Colonic mucosa (tissue), 4 donors: ENCODE measurements at regions of chr7 and their contacts with region 1.

Region 1: DNA sequence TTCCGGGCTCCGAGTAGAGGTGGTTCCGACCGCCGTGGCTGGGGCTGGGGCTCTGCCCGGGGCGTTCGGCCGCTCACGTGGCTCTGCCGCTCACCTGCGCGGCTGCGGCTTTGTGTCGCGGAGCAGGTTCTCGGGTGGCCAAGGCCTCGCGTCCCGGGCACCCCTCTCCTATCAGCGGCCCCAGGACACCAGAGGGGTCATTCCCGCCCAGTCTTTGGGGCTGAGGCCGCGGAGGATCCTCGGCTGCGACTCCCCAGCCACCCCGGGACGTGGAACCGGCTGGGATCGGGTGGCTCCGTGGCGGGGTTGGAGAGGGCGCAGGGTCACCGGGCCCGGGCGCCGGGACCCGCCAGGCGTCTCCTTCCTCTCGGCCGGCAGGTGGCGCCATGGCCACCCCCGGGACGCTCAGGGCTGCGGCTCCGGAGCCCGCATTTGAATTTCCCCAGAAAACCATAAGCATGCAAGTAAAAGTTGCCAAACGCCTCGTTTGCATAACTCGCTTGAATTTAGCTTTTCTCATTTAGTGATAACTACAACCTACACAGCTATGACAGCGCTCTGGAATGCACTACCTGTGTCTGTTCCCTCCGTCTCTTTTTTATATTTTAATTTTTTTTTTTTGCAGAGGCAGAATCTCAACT is 1.2 kb downstream of the COL26A1 start:
- DNase-seq: peak; percentile 48
- H3K4me3 ChIP-seq: peak overlapping the region; percentile 30
- H3K27ac ChIP-seq: no peak overlapping the region
- H3K4me1 ChIP-seq: no peaks in the 10 kb centered on the region
- H3K27me3 ChIP-seq: peaks cover 24% of the 10 kb centered on the region
- CTCF ChIP-seq: peak; percentile 95

Region 2: GRCh38 chr7:100520138-100520537 is 843.7 kb before region 1 on chr7:
- intact Hi-C with region 1: no loop called
- DNase-seq: no peak
- H3K4me3 ChIP-seq: no peak overlapping the region
- H3K27ac ChIP-seq: no peak overlapping the region
- H3K4me1 ChIP-seq: no peaks in the 10 kb centered on the region
- H3K27me3 ChIP-seq: no peaks in the 10 kb centered on the region
- CTCF ChIP-seq: no peak

Region 3: GRCh38 chr7:101410743-101411507 is 47.1 kb after region 1 on chr7:
- intact Hi-C with region 1: loop called (anchors 5 kb)
- DNase-seq: peak; percentile 26
- H3K4me3 ChIP-seq: no peak overlapping the region
- H3K27ac ChIP-seq: no peak overlapping the region
- H3K4me1 ChIP-seq: no peaks in the 10 kb centered on the region
- H3K27me3 ChIP-seq: no peaks in the 10 kb centered on the region
- CTCF ChIP-seq: peak; percentile 80

Region 4: DNA sequence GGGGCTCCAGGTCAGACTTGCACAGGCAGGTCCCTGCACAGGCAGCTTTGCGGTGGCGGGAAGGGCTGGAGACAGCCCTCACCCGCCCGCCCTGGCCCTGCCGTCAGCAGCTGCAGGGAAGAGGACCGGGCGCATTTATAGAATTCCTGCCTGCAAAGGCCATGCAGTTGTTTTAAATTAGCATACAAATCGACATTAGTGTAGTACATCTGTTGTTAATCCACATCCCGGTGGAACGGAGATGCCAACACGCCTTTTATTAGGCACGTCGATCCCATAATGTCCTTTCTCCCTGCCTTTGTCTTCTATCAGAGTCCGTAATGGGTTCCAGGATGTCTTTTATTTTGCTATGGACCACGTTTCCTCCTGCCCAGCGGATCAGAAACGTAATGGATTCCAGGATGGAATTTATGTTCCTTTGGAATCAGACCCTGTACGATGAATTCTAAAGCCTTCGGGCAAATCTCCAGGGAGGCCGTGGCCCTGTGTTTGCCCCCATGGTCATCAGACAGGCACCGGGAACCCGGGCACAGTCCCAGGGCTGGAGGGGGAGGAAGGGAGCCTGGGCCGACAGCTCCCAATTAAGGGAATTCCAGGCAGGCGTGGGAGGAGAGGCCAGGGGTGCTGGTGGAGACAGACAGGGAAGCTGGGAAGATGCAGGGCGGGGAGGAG is 122.7 kb after region 1 on chr7:
- intact Hi-C with region 1: no loop called
- DNase-seq: no peak
- H3K4me3 ChIP-seq: no peak overlapping the region
- H3K27ac ChIP-seq: no peak overlapping the region
- H3K4me1 ChIP-seq: no peaks in the 10 kb centered on the region
- H3K27me3 ChIP-seq: no peaks in the 10 kb centered on the region
- CTCF ChIP-seq: no peak